ENCODE measurements at regions of chr12 and their contacts with region 1.

Region 1: DNA sequence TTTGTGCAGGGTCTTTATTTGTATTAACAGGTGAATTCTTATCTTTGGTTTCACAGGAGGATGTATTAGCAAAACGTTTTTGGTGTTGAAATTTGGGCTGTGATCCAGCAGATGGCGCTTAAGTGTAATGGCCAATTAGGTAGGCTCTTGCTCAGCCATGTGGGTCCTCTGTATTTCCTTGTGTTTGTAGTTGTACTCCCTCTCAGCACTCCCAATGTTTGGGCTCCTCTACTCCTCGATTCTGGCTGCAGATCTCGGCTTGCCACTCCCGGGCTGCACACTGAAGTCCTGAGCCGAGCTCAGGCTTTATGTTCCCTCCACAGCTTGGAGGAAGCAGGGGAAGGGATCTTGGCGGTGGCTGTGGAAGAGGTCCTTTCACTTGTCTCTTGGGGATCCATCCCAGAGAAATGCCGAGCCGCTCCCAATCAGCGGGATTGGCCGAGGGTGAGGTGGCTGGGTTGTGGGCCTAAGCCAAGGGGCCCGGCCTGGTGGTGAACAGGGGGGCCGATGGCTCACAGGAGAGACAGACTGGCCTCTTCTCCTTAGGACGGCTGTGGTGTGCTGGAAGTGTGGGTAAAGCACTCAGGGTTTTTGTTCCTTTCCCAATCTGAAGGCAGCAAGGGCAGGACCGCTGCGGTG is 133.7 kb downstream of the AEBP2 start:
- DNase-seq: peak; percentile 69
- H3K4me3 ChIP-seq: no peak overlapping the region
- H3K27ac ChIP-seq: peak overlapping the region; percentile 98
- H3K4me1 ChIP-seq: peaks cover 48% of the 10 kb centered on the region
- H3K27me3 ChIP-seq: no peaks in the 10 kb centered on the region
- CTCF ChIP-seq: peak; percentile 45 to 60
- POLR2A ChIP-seq: no peak

Region 2: GRCh38 chr12:19190292-19191031 is 382.6 kb before region 1 on chr12:
- CTCF ChIA-PET with region 1: no interaction called
- POLR2A ChIA-PET with region 1: no interaction called
- dilution Hi-C with region 1: no loop called
- intact Hi-C with region 1: no loop called
- DNase-seq: peak; percentile 87
- H3K4me3 ChIP-seq: no peak overlapping the region
- H3K27ac ChIP-seq: no peak overlapping the region
- H3K4me1 ChIP-seq: peaks cover 9% of the 10 kb centered on the region
- H3K27me3 ChIP-seq: no peaks in the 10 kb centered on the region
- CTCF ChIP-seq: no peak
- POLR2A ChIP-seq: no peak

Region 3: DNA sequence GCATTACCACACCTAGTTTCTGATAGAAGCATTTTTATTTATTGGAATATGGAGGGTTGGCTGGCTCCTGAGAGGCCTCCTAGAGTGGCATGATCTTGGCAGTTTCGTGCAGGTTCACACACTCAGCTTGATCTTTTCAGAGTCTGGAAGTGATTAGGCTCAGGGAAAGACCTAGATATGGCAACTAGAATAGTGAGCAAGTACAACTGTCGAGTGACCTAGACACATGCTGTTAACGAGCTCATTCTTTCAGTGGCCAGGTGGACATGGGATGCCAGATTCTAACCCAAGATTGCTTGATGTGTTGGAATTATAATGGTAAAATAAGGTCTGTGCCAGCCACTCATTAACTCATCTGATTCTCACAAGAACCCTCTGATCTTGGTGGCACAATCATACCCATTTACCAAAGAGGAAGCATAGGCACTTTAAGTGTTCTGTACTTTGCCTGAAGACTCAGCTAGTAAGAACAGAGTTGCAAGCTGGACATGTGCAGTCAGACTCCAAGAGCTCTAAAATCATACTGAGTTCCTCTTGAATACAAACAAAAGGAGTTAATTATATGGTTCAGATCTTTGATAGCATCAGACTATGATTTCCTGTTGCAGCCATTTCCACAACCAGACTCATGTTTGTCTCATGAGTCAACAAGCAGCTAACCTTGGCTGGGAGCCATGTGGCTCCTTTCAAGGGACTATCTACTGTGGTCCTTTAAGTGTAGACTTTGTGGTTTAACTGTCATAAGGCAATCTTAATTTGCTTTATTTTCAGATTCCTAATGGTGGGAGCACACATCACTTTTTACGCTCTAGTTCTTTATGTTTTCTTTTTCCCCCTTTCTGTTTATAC is 299.3 kb before region 1 on chr12:
- CTCF ChIA-PET with region 1: no interaction called
- POLR2A ChIA-PET with region 1: no interaction called
- dilution Hi-C with region 1: no loop called
- intact Hi-C with region 1: loop called (anchors 1 kb)
- DNase-seq: peak; percentile 96
- H3K4me3 ChIP-seq: no peak overlapping the region
- H3K27ac ChIP-seq: peak overlapping the region; percentile 71
- H3K4me1 ChIP-seq: peaks cover 19% of the 10 kb centered on the region
- H3K27me3 ChIP-seq: no peaks in the 10 kb centered on the region
- CTCF ChIP-seq: no peak
- POLR2A ChIP-seq: no peak

Region 4: DNA sequence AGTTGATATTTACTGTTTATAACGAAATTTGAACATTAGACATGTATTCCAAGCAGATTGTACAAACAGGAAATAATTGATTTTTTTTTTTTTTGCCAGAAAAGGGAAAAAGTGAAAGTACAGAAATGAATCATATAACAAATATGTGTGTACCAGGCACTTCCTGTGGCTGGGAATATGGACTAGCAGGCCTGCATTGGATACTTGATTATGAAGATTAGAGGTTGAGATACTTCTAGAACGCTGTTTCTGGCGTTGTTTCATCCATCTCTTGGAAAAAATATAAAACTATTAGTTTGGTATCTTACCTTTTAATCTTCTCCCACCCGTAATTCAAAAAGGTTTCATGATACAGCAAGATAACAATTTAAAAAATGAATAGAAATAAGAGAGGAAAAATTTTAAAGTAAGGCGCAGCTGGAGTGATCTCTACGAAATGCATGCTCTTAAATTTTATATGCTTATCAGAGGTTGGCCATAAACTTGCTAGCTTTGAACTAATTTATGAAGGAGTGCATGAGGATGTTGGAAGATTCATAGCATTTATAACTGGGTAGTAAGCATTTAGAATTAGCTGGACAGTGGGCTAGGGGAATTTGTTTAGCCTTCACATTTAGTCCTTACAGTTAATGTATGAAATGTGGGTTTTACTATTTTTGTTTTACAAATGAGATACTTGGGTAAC is 42.9 kb before region 1 on chr12:
- CTCF ChIA-PET with region 1: interaction called, 3 read pairs
- POLR2A ChIA-PET with region 1: interaction called, 4 read pairs
- dilution Hi-C with region 1: no loop called
- intact Hi-C with region 1: loop called (anchors 1 kb)
- DNase-seq: peak; percentile 82
- H3K4me3 ChIP-seq: peak overlapping the region in 1 of 3 experiments; percentile 17
- H3K27ac ChIP-seq: peak overlapping the region; percentile 84
- H3K4me1 ChIP-seq: peaks cover 36% of the 10 kb centered on the region
- H3K27me3 ChIP-seq: no peaks in the 10 kb centered on the region
- CTCF ChIP-seq: no peak
- POLR2A ChIP-seq: peak; percentile 50

Region 5: GRCh38 chr12:19615384-19615725 is 42.3 kb after region 1 on chr12:
- CTCF ChIA-PET with region 1: no interaction called
- POLR2A ChIA-PET with region 1: no interaction called
- dilution Hi-C with region 1: no loop called
- intact Hi-C with region 1: no loop called
- DNase-seq: no peak
- H3K4me3 ChIP-seq: no peak overlapping the region
- H3K27ac ChIP-seq: no peak overlapping the region
- H3K4me1 ChIP-seq: peaks cover 6% of the 10 kb centered on the region
- H3K27me3 ChIP-seq: no peaks in the 10 kb centered on the region
- CTCF ChIP-seq: no peak
- POLR2A ChIP-seq: no peak

Region 6: DNA sequence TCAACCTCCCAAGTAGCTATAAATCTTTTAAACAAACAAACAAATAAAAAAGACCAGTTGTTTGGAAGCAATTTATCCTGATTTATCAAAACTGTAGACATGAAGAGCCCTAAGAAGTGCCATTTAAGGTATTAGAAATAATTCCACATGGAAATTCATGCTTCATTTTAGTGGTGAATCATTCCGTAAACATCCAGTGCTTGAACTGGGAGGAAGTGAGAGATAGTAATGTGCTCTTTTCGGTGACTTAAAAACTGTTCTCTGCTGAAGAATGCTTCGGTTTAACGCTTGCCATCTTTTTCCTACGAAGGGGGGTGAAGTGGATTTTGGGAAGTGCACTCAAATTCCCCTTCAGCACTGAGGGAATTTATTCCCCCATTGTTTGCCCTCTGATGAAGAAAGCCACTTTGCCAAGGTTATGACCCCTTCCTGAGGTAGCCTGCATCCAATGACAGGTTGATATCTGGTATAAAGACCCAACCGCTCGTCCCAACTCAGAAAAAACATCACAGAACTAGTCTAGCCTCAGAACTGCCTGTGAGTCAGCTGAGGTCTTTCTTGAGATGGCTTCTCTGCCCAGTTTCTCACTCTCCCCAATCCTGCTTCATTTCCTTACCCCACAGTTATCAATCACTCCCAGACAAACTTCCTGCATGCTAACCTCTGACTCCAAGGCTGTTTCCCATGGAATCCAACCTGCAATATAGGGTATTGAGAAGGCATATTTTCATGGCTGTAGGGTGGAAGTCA is 110.3 kb after region 1 on chr12:
- CTCF ChIA-PET with region 1: interaction called, 3 read pairs
- POLR2A ChIA-PET with region 1: no interaction called
- dilution Hi-C with region 1: no loop called
- intact Hi-C with region 1: loop called (anchors 1 kb)
- DNase-seq: peak; percentile 99
- H3K4me3 ChIP-seq: no peak overlapping the region
- H3K27ac ChIP-seq: peak overlapping the region; percentile 97
- H3K4me1 ChIP-seq: peaks cover 28% of the 10 kb centered on the region
- H3K27me3 ChIP-seq: no peaks in the 10 kb centered on the region
- CTCF ChIP-seq: no peak
- POLR2A ChIP-seq: peak; percentile 48

Region 7: DNA sequence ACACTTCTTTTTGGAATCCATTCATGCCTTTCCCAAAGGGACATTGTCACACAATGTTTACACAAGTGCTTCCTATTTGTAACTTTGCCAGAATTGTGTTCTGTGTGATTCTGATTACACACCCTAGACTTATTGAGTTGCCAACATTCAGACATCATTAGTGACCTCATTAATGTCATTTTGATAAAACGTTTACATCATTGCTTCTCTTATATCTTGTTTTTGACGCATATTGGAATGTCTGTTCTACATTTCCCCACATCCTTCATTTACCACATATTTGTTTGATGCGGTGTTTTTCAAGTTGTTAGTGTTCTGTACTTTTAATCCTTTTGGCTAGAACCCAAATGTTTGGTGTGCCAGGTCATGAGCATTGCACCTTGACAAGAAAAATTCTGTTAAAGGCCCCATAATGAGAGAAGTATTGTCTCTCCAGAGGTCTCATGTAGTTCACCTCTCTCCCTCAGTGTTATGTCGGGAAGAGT is 171.7 kb after region 1 on chr12:
- CTCF ChIA-PET with region 1: interaction called, 16 read pairs
- POLR2A ChIA-PET with region 1: no interaction called
- dilution Hi-C with region 1: no loop called
- intact Hi-C with region 1: loop called (anchors 1 kb)
- DNase-seq: peak; percentile 99
- H3K4me3 ChIP-seq: no peak overlapping the region
- H3K27ac ChIP-seq: peak overlapping the region; percentile 96
- H3K4me1 ChIP-seq: peaks cover 22% of the 10 kb centered on the region
- H3K27me3 ChIP-seq: no peaks in the 10 kb centered on the region
- CTCF ChIP-seq: no peak
- POLR2A ChIP-seq: peak; percentile 66

Region 8: DNA sequence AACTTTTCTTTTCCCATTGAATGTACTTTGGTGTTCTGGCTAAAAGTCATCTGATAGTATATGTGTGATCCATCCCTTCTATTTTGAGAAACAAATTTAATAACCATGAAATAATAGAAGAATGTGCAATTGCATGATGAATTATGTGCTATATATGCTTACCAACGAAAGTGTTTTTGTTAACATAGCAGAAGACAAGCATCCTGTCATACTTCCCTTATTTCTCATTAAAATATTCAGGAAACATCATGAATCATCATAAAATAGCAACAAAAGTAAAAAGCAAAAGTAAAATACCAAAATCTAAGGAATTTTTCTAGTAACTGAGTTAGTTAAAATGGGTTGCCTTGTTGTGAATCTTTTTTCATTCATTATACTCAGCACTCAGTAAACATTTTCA is 386.3 kb after region 1 on chr12:
- CTCF ChIA-PET with region 1: no interaction called
- POLR2A ChIA-PET with region 1: no interaction called
- dilution Hi-C with region 1: no loop called
- intact Hi-C with region 1: loop called (anchors 1 kb)
- DNase-seq: peak; percentile 79
- H3K4me3 ChIP-seq: peak overlapping the region in 1 of 3 experiments; percentile 43
- H3K27ac ChIP-seq: peak overlapping the region; percentile 86
- H3K4me1 ChIP-seq: peaks cover 49% of the 10 kb centered on the region
- H3K27me3 ChIP-seq: no peaks in the 10 kb centered on the region
- CTCF ChIP-seq: no peak
- POLR2A ChIP-seq: no peak

Region 9: GRCh38 chr12:20212658-20213555 is 639.9 kb after region 1 on chr12:
- CTCF ChIA-PET with region 1: no interaction called
- POLR2A ChIA-PET with region 1: no interaction called
- dilution Hi-C with region 1: no loop called
- intact Hi-C with region 1: loop called (anchors 1 kb)
- DNase-seq: peak; percentile 99
- H3K4me3 ChIP-seq: peak overlapping the region in 1 of 3 experiments; percentile 15
- H3K27ac ChIP-seq: peak overlapping the region; percentile 77
- H3K4me1 ChIP-seq: peaks cover 12% of the 10 kb centered on the region
- H3K27me3 ChIP-seq: no peaks in the 10 kb centered on the region
- CTCF ChIP-seq: no peak
- POLR2A ChIP-seq: no peak